Common myeloid progenitor, CD34-positive (primary cell): ENCODE measurements at regions of chr14 and their contacts with region 1.

Region 1: DNA sequence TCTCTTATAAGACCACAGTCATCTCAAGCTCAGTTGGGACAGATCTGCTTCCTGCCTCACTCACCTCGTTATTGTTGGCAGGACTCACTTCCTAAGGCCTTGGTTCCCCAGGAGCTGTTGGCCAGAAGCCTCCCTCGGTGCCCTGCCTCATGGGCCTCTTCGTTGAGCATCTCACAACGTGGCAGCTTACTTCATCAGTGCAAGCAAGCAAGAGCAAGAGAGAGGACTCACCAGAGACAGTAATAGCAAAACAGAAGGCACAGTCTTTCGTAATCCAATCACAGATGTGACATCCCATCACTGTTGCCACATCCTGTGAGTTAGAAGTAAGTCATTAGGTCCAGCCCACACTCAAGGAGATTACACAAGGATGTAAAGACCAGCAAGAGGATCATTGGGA is 5.1 kb upstream of the NUMB start:
- DNase-seq: peak in 2 of 3 donors; percentile 77 to 78
- H3K4me3 ChIP-seq: peak overlapping the region in 1 of 7 experiments; percentile 66
- H3K27ac ChIP-seq: no peak overlapping the region
- H3K4me1 ChIP-seq: peaks cover 20 to 68% (median 47%) of the 10 kb centered on the region in 4 experiments
- H3K27me3 ChIP-seq: no peaks in the 10 kb centered on the region

Region 2: GRCh38 chr14:73477618-73478266 is 14.3 kb after region 1 on chr14:
- CTCF ChIA-PET with region 1: interaction called, 17 read pairs
- POLR2A ChIA-PET with region 1: no interaction called
- DNase-seq: peak in 2 of 3 donors; percentile 43 to 65
- H3K4me3 ChIP-seq: no peak overlapping the region
- H3K27ac ChIP-seq: no peak overlapping the region
- H3K4me1 ChIP-seq: no peaks in the 10 kb centered on the region
- H3K27me3 ChIP-seq: peaks cover 0 to 2% (median 0%) of the 10 kb centered on the region in 5 experiments

Region 3: DNA sequence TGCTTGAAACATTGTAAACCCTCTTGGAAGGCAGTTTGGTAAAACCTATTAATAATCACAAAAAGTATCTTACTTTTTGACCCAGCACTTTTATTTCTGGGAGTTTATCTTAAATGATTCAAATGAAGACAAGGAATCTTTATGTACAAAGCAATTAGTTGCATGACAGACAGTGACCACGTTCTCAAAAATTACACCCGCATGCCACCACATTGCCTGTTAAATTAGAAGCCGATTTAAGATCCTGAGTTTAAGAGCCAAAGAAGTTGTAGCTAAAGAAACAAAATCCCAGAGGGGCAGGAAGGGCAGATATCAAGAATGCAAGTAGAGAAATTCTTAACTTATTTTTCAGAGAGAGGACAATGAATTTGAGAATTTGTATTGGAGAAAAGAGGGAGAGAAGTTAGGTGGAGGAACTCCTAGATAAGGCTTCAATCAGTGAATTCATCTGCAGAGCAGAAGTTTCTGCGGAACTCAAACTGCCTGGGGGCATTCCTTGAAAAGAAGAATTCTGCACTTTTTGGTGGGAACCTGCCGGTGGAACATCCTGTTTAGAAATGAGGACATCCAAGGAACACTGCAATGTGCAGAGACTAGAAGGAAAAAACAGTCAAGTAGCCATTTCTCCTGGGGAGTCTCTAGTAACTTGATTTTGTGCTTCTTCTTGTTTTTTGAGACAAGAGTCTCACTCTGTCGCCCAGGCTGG is 26.2 kb after region 1 on chr14:
- CTCF ChIA-PET with region 1: no interaction called
- POLR2A ChIA-PET with region 1: no interaction called
- DNase-seq: no peak
- H3K4me3 ChIP-seq: no peak overlapping the region
- H3K27ac ChIP-seq: no peak overlapping the region
- H3K4me1 ChIP-seq: peaks cover 7 to 30% (median 25%) of the 10 kb centered on the region in 4 experiments
- H3K27me3 ChIP-seq: peaks cover 0 to 3% (median 0%) of the 10 kb centered on the region in 5 experiments

Region 4: GRCh38 chr14:73526569-73526968 is 63.2 kb after region 1 on chr14:
- CTCF ChIA-PET with region 1: no interaction called
- POLR2A ChIA-PET with region 1: no interaction called
- DNase-seq: no peak
- H3K4me3 ChIP-seq: no peak overlapping the region
- H3K27ac ChIP-seq: no peak overlapping the region
- H3K4me1 ChIP-seq: no peaks in the 10 kb centered on the region
- H3K27me3 ChIP-seq: no peaks in the 10 kb centered on the region